ENCODE measurements at regions of chr17 and their contacts with region 1.

Region 1: DNA sequence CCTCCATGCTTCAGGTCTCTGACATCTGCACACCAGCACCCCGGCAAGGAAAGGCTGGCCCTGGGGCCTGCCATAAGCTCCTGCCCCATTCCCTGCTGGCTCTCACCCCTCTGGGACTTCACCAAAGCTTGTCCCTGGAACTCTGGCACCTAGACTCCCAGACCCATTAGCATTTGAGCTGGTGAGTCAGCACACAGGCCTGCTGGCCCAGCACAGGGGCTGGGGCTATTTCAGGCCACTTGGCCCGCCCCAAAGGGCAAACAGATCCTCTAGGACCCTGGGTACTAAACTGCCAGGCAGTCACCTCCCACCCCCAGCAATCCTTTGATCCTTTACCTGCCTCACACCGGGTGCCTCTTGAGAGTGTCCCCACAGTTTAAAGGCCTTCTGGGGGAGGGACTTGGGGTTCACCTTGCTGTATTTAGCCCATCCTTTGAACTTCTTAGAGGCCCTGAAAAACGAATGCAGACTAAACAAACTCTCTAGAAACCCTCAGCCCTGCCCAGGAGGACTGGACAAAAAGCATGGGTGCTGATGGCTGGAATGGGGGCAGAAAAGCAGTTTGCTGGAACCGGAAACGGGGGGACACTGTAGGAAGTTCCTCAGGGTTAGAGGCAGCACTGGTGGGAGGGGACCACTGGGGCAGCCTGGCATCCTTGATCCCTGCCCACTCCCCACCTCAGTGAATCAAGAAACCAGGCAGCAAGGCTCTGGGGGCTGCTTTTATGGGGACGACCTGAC is 3.2 kb upstream of the SAMD14 start:
- DNase-seq: peak; percentile 84 to 89
- ATAC-seq: peak; percentile 65
- H3K4me3 ChIP-seq: no peak overlapping the region
- H3K27ac ChIP-seq: peak overlapping the region; percentile 80 to 92
- H3K4me1 ChIP-seq: peaks cover 0 to 2% of the 10 kb centered on the region in 2 donors
- H3K27me3 ChIP-seq: no peaks in the 10 kb centered on the region

Region 2: DNA sequence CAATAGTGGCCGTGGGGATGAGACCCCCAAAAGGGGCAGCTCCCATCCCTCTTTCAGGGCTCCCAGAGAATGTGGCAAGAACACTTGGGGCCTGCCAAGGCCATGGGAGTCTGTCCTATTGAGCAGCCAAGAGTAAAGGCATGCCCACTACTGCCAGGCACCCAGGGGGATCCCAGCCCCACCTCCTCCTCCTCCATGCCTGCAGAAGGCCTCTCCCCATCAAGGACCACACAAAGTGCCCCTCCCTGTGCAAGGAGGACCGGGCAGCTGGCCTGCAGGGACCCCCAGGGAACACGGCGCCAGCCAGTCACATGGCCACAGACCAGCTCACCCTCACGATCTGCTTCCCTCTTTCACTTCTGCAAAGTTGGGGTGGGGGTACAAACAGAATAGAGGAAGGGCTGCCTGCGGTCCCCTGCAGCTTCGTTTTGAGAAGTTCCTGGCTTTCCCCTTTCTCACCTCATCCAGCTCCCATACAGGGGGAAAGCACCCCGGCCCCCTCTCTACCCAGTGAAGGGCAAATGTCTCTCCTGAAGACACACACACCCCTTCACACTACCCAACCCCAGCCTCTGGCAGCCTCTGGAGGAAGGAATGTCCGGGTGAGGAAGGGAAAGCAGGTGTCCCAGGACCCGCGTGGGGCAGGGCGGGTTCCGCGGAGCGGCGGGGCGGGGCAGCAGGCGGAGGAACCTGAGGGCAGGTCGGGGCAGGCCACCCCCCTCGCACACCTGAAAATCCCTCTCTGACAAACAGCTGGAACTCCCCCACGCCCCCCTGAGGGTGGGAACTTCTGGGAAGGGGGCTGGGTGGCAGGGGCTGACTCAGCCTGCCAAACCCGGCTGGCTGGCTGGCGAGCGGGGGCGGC is 15.3 kb after region 1 on chr17:
- intact Hi-C with region 1: loop called in 1 of 2 experiments (anchors 1 kb)
- DNase-seq: peak; percentile 83 to 91
- ATAC-seq: peak; percentile 6
- H3K4me3 ChIP-seq: peak overlapping the region; percentile 75 to 80
- H3K27ac ChIP-seq: peak overlapping the region in 1 of 2 donors; percentile 50
- H3K4me1 ChIP-seq: peaks cover 0 to 3% of the 10 kb centered on the region in 2 donors
- H3K27me3 ChIP-seq: no peaks in the 10 kb centered on the region